T-cell (primary cell): ENCODE measurements at regions of chr2 and their contacts with region 1.

Region 1: GRCh38 chr2:75608684-75609333 is 37.8 kb upstream of the MRPL19 start:
- DNase-seq: peak in 33 of 35 experiments; percentile 7 to 64 (median 35)
- ATAC-seq: peak; percentile 71 to 83 (median 76)
- H3K4me3 ChIP-seq: peak overlapping the region in 1 of 2 donors; percentile 12
- H3K4me3 Mint-ChIP-seq: no peak overlapping the region
- H3K27ac ChIP-seq: no peak overlapping the region
- H3K27ac Mint-ChIP-seq: no peak overlapping the region
- H3K4me1 ChIP-seq: peaks cover 0 to 5% of the 10 kb centered on the region in 2 experiments
- H3K4me1 Mint-ChIP-seq: no peaks in the 10 kb centered on the region
- H3K27me3 ChIP-seq: peaks cover 9 to 46% of the 10 kb centered on the region in 2 experiments
- H3K27me3 Mint-ChIP-seq: peaks cover 51 to 66% of the 10 kb centered on the region in 2 donors

Region 2: GRCh38 chr2:74919827-74920226 is 689.0 kb before region 1 on chr2:
- CTCF ChIA-PET with region 1: interaction called in 1 of 2 experiments, 10 read pairs
- POLR2A ChIA-PET with region 1: no interaction called
- DNase-seq: peak; percentile 29 to 79 (median 65)
- ATAC-seq: peak; percentile 60 to 93 (median 76)
- H3K4me3 ChIP-seq: peak overlapping the region in 1 of 2 donors; percentile 55
- H3K4me3 Mint-ChIP-seq: peak overlapping the region in 1 of 3 donors; percentile 44
- H3K27ac ChIP-seq: no peak overlapping the region
- H3K27ac Mint-ChIP-seq: no peak overlapping the region
- H3K4me1 ChIP-seq: peaks cover 0 to 8% of the 10 kb centered on the region in 2 experiments
- H3K4me1 Mint-ChIP-seq: peaks cover 0 to 5% (median 0%) of the 10 kb centered on the region in 3 donors
- H3K27me3 ChIP-seq: peaks cover 0 to 17% of the 10 kb centered on the region in 2 experiments
- H3K27me3 Mint-ChIP-seq: peaks cover 11% of the 10 kb centered on the region in 2 donors

Region 3: GRCh38 chr2:75173740-75174139 is 435.1 kb before region 1 on chr2:
- CTCF ChIA-PET with region 1: no interaction called
- POLR2A ChIA-PET with region 1: no interaction called
- DNase-seq: no peak
- ATAC-seq: no peak
- H3K4me3 ChIP-seq: no peak overlapping the region
- H3K4me3 Mint-ChIP-seq: no peak overlapping the region
- H3K27ac ChIP-seq: no peak overlapping the region
- H3K27ac Mint-ChIP-seq: no peak overlapping the region
- H3K4me1 ChIP-seq: no peaks in the 10 kb centered on the region
- H3K4me1 Mint-ChIP-seq: no peaks in the 10 kb centered on the region
- H3K27me3 ChIP-seq: peaks cover 0 to 3% of the 10 kb centered on the region in 2 experiments
- H3K27me3 Mint-ChIP-seq: peaks cover 1 to 9% of the 10 kb centered on the region in 2 donors

Region 4: GRCh38 chr2:75403991-75404428 is 204.8 kb before region 1 on chr2:
- CTCF ChIA-PET with region 1: no interaction called
- POLR2A ChIA-PET with region 1: no interaction called
- DNase-seq: peak in 1 of 35 experiments; percentile 60
- ATAC-seq: peak in 3 of 4 experiments; percentile 35 to 60 (median 59)
- H3K4me3 ChIP-seq: no peak overlapping the region
- H3K4me3 Mint-ChIP-seq: no peak overlapping the region
- H3K27ac ChIP-seq: no peak overlapping the region
- H3K27ac Mint-ChIP-seq: no peak overlapping the region
- H3K4me1 ChIP-seq: no peaks in the 10 kb centered on the region
- H3K4me1 Mint-ChIP-seq: peaks cover 0 to 19% (median 17%) of the 10 kb centered on the region in 3 donors
- H3K27me3 ChIP-seq: no peaks in the 10 kb centered on the region
- H3K27me3 Mint-ChIP-seq: peaks cover 0 to 14% of the 10 kb centered on the region in 2 donors